CD4-positive, alpha-beta memory T cell (primary cell): ENCODE measurements at regions of chr2 and their contacts with region 1.

Region 1: DNA sequence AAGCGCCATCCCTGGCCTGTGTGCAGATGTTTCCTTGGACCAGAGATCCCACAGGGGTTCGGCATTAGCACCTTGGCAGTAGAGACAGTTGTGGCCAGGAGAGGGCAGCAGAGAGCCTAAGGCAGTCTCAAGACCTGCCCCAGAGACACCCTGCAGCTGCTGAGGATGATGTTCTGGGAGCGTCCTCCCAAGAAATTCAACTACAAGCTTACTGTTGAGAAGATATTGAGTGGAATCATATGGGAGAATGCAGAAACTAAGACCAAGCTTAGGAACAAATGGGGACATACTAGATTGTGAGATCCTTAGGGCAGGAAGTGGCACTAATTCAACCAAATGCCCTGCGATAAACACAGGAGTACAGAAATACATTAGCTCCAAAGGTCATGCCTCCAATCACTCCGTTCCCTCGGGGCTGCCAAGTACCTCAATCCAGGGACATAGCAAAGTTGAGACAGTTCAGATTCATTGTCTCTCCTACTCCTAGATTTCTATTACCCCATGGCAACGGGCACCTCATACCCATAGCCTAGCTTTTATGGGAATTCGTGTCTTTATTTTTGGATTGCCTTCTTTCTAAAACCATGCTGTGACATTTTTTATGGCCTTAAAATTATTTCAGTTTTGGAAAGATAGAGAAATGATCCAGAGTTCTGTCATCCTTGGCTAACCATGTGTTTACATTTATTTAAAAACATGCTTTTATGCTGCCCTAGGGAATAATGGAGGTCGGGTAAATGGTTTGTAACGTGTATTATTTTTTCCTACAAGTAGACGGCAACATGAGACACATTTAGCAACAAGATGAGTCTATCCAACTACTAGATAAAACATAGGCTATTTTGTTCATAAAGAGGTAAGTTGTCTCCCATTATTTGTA is 2.2 kb upstream of the ERMN start:
- DNase-seq: peak; percentile 75 to 83 (median 78)
- H3K4me3 ChIP-seq: peak overlapping the region in 1 of 2 donors; percentile 13
- H3K4me3 Mint-ChIP-seq: peak overlapping the region in 7 of 8 donors; percentile 63 to 75 (median 70)
- H3K27ac ChIP-seq: no peak overlapping the region
- H3K27ac Mint-ChIP-seq: peak overlapping the region; percentile 27 to 91 (median 82)
- H3K4me1 ChIP-seq: peaks cover 42% of the 10 kb centered on the region
- H3K4me1 Mint-ChIP-seq: peaks cover 34 to 49% (median 40%) of the 10 kb centered on the region in 4 donors
- H3K27me3 ChIP-seq: no peaks in the 10 kb centered on the region
- H3K27me3 Mint-ChIP-seq: no peaks in the 10 kb centered on the region

Region 2: GRCh38 chr2:157291009-157291408 is 36.9 kb before region 1 on chr2:
- CTCF ChIA-PET with region 1: no interaction called
- POLR2A ChIA-PET with region 1: no interaction called
- intact Hi-C with region 1: no loop called
- DNase-seq: no peak
- H3K4me3 ChIP-seq: no peak overlapping the region
- H3K4me3 Mint-ChIP-seq: no peak overlapping the region
- H3K27ac ChIP-seq: no peak overlapping the region
- H3K27ac Mint-ChIP-seq: no peak overlapping the region
- H3K4me1 ChIP-seq: no peaks in the 10 kb centered on the region
- H3K4me1 Mint-ChIP-seq: no peaks in the 10 kb centered on the region
- H3K27me3 ChIP-seq: no peaks in the 10 kb centered on the region
- H3K27me3 Mint-ChIP-seq: peaks cover 0 to 3% of the 10 kb centered on the region in 2 donors

Region 3: DNA sequence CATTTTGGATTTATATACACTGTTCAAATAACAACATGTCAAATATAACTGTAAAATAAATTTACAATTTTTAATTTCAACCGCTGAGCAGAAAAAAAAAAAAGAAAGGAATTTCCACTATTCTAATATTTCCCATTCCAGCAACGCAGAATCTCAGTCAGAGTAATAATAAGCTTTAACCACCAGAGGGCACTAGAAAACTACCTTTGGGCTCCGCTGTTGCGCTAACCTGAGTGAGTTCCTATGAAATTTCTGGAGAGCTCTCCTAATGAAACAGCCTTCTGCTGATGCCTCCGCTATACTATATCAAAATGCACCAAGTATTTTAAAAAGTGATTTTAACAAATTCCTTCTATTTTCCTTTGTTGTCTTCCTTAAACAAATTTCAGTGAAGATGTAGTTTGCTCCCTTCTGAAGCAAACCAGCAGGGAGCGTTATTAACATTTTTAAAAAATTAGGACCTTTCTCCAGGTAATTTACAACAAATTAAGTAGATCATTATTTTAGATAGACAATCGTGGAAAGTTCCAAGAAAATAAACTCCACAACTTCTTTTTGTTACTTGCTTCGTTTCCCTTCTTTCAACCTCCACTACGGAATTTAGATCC is 25.3 kb before region 1 on chr2:
- CTCF ChIA-PET with region 1: interaction called, 136 read pairs
- POLR2A ChIA-PET with region 1: interaction called, 3 read pairs
- intact Hi-C with region 1: no loop called
- DNase-seq: peak in 4 of 5 donors; percentile 56 to 63 (median 60)
- H3K4me3 ChIP-seq: no peak overlapping the region
- H3K4me3 Mint-ChIP-seq: no peak overlapping the region
- H3K27ac ChIP-seq: no peak overlapping the region
- H3K27ac Mint-ChIP-seq: no peak overlapping the region
- H3K4me1 ChIP-seq: no peaks in the 10 kb centered on the region
- H3K4me1 Mint-ChIP-seq: peaks cover 0 to 6% (median 2%) of the 10 kb centered on the region in 4 donors
- H3K27me3 ChIP-seq: no peaks in the 10 kb centered on the region
- H3K27me3 Mint-ChIP-seq: peaks cover 1 to 3% of the 10 kb centered on the region in 2 donors

Region 4: GRCh38 chr2:157413326-157414035 is 85.6 kb after region 1 on chr2:
- CTCF ChIA-PET with region 1: interaction called, 63 read pairs
- POLR2A ChIA-PET with region 1: interaction called, 15 read pairs
- intact Hi-C with region 1: no loop called
- DNase-seq: peak; percentile 83 to 89 (median 86)
- H3K4me3 ChIP-seq: peak overlapping the region in 1 of 2 donors; percentile 9
- H3K4me3 Mint-ChIP-seq: peak overlapping the region; percentile 24 to 80 (median 71)
- H3K27ac ChIP-seq: peak overlapping the region; percentile 54
- H3K27ac Mint-ChIP-seq: peak overlapping the region; percentile 83 to 98 (median 91)
- H3K4me1 ChIP-seq: peaks cover 97% of the 10 kb centered on the region
- H3K4me1 Mint-ChIP-seq: peaks cover 69 to 91% (median 82%) of the 10 kb centered on the region in 4 donors
- H3K27me3 ChIP-seq: no peaks in the 10 kb centered on the region
- H3K27me3 Mint-ChIP-seq: no peaks in the 10 kb centered on the region

Region 5: DNA sequence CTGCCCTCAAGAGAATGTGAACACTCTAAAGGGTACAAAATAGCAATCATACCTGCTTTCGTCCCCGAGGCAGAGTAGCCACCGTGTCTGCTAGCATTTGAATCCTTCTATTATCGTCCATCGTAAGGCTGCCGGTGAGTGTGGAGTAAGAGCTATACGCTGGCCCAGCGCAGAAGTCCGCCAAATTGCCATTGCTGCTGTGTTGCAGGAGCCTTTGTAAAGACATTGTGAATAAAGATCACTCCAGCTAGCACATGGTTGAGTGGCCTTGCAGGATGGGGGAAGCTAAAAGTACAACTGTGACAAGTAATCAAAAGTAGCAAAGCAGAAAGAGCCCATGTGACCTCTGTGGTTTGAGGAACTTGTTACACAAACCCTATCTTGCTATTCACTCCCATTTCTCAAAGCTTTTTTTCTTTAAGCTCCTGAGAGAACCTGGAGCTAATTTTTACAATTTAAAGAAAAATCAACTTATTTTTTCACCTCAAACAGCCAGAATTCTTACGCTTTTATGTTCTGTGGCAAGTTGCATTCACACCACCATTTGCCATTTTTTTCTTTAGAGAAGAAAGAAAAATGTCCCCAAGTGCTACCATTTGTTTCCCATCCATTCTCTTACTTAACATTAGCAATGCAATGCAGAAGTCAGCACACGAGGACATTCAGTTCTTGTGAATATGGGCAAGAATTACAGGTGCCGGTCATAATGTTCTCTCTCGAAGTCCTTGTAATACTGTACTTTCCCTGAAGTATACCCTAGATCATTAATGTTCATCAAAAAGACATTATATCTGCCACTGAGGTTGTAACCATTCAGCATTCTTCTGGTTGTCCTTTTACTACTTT is 116.2 kb after region 1 on chr2 and contains the start of gene CYTIP:
- CTCF ChIA-PET with region 1: interaction called, 340 read pairs
- POLR2A ChIA-PET with region 1: interaction called, 375 read pairs
- intact Hi-C with region 1: loop called (anchors 2 kb)
- DNase-seq: peak; percentile 71 to 78 (median 76)
- H3K4me3 ChIP-seq: peak within 1 kb of the TSS; percentile 81 to 85
- H3K4me3 Mint-ChIP-seq: peak within 1 kb of the TSS; percentile 90 to 100 (median 98)
- H3K27ac ChIP-seq: peak within 1 kb of the TSS; percentile 85
- H3K27ac Mint-ChIP-seq: peak within 1 kb of the TSS; percentile 94 to 100 (median 95)
- H3K4me1 ChIP-seq: peaks cover 47% of the 10 kb centered on the region
- H3K4me1 Mint-ChIP-seq: peaks cover 33 to 78% (median 38%) of the 10 kb centered on the region in 4 donors
- H3K27me3 ChIP-seq: no peaks in the 10 kb centered on the region
- H3K27me3 Mint-ChIP-seq: no peaks in the 10 kb centered on the region
- total RNA-seq, gene CYTIP: 231 to 248 TPM

Region 6: DNA sequence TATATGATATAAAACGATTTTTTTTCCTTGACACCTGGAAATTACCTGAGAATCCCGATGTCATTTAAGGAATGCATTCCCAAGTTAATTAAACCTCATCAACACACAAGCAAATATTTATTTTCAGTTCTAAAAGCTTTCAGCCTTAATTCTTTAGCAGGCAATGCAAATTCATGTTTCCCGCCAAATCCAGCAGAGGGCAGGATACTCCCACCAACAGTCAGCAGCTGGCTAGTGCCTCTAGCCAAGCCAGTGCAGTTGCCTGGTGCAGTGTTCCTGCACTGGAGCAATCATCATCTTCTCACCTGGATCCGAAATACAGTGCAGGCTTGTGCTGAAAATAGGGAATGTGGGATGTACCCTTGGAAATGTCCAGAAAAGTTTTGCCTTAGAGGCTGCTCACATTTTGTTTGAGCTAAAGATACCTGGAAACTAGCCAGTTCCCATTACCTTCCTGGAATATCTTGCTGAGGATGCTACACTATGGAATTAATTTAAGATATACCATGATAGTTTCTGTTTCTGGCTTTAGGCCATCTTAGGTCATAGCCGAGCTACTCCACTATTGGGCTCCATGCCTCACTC is 164.4 kb after region 1 on chr2:
- CTCF ChIA-PET with region 1: interaction called, 135 read pairs
- POLR2A ChIA-PET with region 1: interaction called, 6 read pairs
- intact Hi-C with region 1: loop called (anchors 1 kb)
- DNase-seq: peak; percentile 65 to 70 (median 69)
- H3K4me3 ChIP-seq: no peak overlapping the region
- H3K4me3 Mint-ChIP-seq: no peak overlapping the region
- H3K27ac ChIP-seq: no peak overlapping the region
- H3K27ac Mint-ChIP-seq: peak overlapping the region in 1 of 7 donors; percentile 65
- H3K4me1 ChIP-seq: peaks cover 8% of the 10 kb centered on the region
- H3K4me1 Mint-ChIP-seq: peaks cover 17 to 19% (median 18%) of the 10 kb centered on the region in 4 donors
- H3K27me3 ChIP-seq: no peaks in the 10 kb centered on the region
- H3K27me3 Mint-ChIP-seq: no peaks in the 10 kb centered on the region

Region 7: DNA sequence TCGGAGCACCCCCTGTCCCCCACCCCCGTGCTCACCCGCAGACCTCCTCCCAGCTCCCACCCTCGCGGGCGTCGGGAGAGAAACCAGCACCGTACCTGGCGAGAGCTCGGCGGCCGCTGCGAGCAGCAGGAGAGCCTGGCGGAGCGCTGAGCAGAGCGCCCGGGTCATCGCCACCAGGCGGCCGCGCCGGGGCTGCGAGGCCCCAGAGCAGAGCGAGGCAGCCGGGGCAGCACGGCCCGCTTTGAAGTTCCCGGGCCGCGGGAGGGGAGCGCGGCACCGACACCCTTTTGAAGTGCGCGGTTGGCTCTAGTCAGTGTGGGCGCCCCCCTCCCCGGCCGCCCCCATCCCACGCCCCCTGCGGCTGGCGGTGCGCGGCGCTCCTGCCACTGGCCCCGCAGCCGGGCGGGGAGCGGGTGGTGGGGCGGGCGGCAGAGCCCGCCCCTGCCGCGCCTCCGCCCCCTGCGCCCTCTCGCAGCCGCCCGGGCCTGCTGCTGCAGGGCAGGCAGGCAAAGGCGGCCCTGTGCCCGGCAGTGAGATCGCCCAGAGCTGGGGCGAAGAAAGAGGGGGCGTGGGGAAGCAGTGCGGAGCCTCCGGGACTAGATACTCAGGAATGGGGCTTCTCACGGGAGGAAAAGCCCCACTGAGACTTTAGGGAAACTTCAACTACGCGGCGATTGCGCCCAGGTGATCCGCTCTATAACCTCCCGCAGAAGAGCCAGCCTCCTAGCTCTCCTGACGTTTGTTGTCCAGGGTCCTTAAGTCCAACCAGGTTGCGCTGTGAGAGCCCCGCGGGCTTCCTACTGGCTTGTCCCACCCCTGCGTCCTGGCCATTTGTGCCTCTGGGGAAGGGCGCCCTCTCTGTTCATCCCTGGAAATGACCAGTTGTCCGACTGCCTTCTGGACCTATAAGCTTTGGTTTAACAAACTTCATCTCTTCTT is 300.9 kb after region 1 on chr2 and contains the start of gene ACVR1C:
- CTCF ChIA-PET with region 1: interaction called, 16 read pairs
- POLR2A ChIA-PET with region 1: interaction called, 3 read pairs
- intact Hi-C with region 1: no loop called
- DNase-seq: peak; percentile 70 to 81 (median 75)
- H3K4me3 ChIP-seq: peak within 1 kb of the TSS; percentile 45 to 68
- H3K4me3 Mint-ChIP-seq: peak within 1 kb of the TSS; percentile 92 to 98 (median 95)
- H3K27ac ChIP-seq: peak within 1 kb of the TSS; percentile 58
- H3K27ac Mint-ChIP-seq: peak within 1 kb of the TSS; percentile 85 to 94 (median 89)
- H3K4me1 ChIP-seq: peaks cover 39% of the 10 kb centered on the region
- H3K4me1 Mint-ChIP-seq: peaks cover 22 to 48% (median 33%) of the 10 kb centered on the region in 4 donors
- H3K27me3 ChIP-seq: no peaks in the 10 kb centered on the region
- H3K27me3 Mint-ChIP-seq: peaks cover 0 to 2% of the 10 kb centered on the region in 2 donors
- total RNA-seq, gene ACVR1C: 6.3 to 6.9 TPM